CD8-positive, alpha-beta T cell (primary cell): ENCODE measurements at regions of chr6 and their contacts with region 1.

Region 1: DNA sequence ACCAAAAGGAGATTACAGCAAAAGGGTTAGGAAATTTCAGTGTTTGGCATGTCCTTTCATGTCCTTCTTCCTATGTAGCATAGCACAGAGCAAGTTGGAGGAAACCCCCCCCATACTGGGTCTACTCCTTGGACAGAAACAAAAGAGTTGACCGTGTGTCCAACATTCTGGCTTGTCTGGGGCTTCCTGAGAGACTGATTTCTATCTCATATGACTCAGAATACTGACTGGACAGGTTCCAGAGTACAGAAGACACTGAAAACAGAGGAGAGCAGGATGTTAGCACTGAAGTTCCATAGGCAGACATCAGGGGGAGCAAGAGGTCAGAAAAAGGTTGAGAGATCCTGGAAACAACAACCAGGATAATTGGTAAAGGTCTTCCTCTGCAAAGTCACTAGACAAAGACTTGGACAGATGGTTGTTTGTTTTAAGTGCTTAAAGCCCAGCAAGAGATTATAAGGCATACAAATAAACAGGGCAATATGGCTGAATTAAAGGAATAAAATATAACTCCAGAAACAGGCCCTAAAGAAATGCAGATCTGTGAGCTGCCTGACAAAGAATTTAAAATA is 48.4 kb downstream of the USP49 start:
- DNase-seq: peak; percentile 16 to 74 (median 53)
- ATAC-seq: peak; percentile 81
- H3K4me3 ChIP-seq: no peak overlapping the region
- H3K4me3 Mint-ChIP-seq: no peak overlapping the region
- H3K27ac ChIP-seq: no peak overlapping the region
- H3K27ac Mint-ChIP-seq: no peak overlapping the region
- H3K4me1 ChIP-seq: no peaks in the 10 kb centered on the region
- H3K4me1 Mint-ChIP-seq: peaks cover 3% of the 10 kb centered on the region
- H3K27me3 ChIP-seq: no peaks in the 10 kb centered on the region
- H3K27me3 Mint-ChIP-seq: no peaks in the 10 kb centered on the region
- CTCF ChIP-seq: peak; percentile 77

Region 2: DNA sequence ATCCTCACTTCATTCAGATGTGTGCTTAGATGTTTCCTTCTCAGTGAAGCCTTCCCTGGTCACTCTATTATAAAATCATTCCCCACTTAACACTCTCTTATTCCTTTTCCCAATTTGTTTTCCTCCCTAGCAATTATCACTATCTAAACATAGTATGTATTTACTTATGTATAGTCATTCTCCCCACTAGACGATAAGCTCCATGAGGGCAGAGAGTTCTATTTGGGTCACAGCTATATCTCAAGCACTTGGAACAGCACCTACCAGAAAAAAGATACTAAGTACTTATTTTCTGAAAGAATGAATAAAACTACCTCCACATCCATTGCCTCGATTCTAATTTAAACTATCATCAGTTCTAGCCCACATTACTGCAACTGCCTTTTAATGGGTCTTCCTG is 12.0 kb after region 1 on chr6:
- CTCF ChIA-PET with region 1: interaction called, 14 read pairs
- POLR2A ChIA-PET with region 1: no interaction called
- intact Hi-C with region 1: no loop called
- DNase-seq: no peak
- ATAC-seq: no peak
- H3K4me3 ChIP-seq: no peak overlapping the region
- H3K4me3 Mint-ChIP-seq: no peak overlapping the region
- H3K27ac ChIP-seq: no peak overlapping the region
- H3K27ac Mint-ChIP-seq: no peak overlapping the region
- H3K4me1 ChIP-seq: no peaks in the 10 kb centered on the region
- H3K4me1 Mint-ChIP-seq: no peaks in the 10 kb centered on the region
- H3K27me3 ChIP-seq: no peaks in the 10 kb centered on the region
- H3K27me3 Mint-ChIP-seq: no peaks in the 10 kb centered on the region
- CTCF ChIP-seq: no peak

Region 3: GRCh38 chr6:42217519-42218367 is 371.0 kb after region 1 on chr6 and contains the start of gene MRPS10:
- CTCF ChIA-PET with region 1: interaction called, 23 read pairs
- POLR2A ChIA-PET with region 1: no interaction called
- intact Hi-C with region 1: loop called in 1 of 2 experiments (anchors 2 kb)
- DNase-seq: peak; percentile 81 to 95 (median 91)
- ATAC-seq: peak; percentile 99
- H3K4me3 ChIP-seq: peak within 1 kb of the TSS; percentile 70 to 93
- H3K4me3 Mint-ChIP-seq: peak within 1 kb of the TSS; percentile 99
- H3K27ac ChIP-seq: peak within 1 kb of the TSS; percentile 63 to 74
- H3K27ac Mint-ChIP-seq: peak within 1 kb of the TSS; percentile 97
- H3K4me1 ChIP-seq: peaks cover 8% of the 10 kb centered on the region
- H3K4me1 Mint-ChIP-seq: peaks cover 25% of the 10 kb centered on the region
- H3K27me3 ChIP-seq: no peaks in the 10 kb centered on the region
- H3K27me3 Mint-ChIP-seq: no peaks in the 10 kb centered on the region
- CTCF ChIP-seq: no peak
- total RNA-seq, gene MRPS10: 17.0 to 17.4 TPM